ENCODE measurements at regions of chr12 and their contacts with region 1.

Region 1: GRCh38 chr12:89470741-89471509 is 53.7 kb downstream of the GALNT4 start:
- DNase-seq: peak in 2 of 5 donors; percentile 33 to 37
- H3K4me3 ChIP-seq: no peak overlapping the region
- H3K4me3 Mint-ChIP-seq: peak overlapping the region in 1 of 7 donors; percentile 52
- H3K27ac ChIP-seq: no peak overlapping the region
- H3K27ac Mint-ChIP-seq: peak overlapping the region; percentile 39 to 95 (median 76)
- H3K4me1 ChIP-seq: peaks cover 32% of the 10 kb centered on the region
- H3K4me1 Mint-ChIP-seq: peaks cover 60 to 64% (median 62%) of the 10 kb centered on the region in 3 donors
- H3K27me3 ChIP-seq: no peaks in the 10 kb centered on the region
- H3K27me3 Mint-ChIP-seq: no peaks in the 10 kb centered on the region

Region 2: DNA sequence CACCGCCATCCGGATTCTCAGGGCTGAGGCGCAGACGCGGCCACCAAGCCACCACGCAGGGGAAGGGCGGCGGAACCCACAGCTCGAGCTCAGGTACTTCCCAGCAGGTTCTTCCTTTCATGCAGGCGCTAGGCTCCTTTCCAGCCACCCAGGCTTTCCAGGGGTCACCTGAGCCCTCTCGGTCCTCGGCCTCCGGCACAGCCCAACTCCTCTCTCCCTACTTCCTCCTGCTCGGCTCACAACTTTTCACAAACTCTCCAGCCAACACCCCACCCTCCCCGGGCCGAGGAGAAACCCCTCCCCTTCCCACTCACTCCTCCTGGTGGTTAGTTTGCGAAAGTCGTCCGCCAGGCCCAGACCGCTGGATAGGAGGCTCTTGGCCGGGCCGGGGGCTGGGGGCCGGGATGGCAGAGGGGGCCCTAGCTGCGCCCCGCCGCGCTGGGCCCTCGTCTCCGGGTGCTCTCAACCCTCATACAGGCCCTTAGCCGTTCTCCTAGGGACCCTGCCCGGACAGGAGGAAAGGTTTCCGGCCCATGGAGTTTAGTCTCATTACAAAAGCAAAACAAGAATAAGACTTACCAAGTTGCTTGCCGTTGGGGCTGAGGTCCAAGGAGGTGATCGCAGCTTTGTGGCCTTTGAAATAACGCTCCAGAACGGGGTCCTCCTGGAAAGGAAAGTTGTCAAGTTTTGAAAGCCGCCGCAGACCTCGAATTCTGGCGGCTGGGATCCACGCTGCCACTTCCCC is 53.8 kb after region 1 on chr12 and contains the start of gene GALNT4:
- CTCF ChIA-PET with region 1: interaction called, 78 read pairs
- POLR2A ChIA-PET with region 1: interaction called, 9 read pairs
- DNase-seq: peak; percentile 53 to 84 (median 73)
- H3K4me3 ChIP-seq: peak within 1 kb of the TSS; percentile 87
- H3K4me3 Mint-ChIP-seq: peak within 1 kb of the TSS; percentile 92 to 99 (median 96)
- H3K27ac ChIP-seq: peak within 1 kb of the TSS; percentile 84
- H3K27ac Mint-ChIP-seq: peak within 1 kb of the TSS; percentile 85 to 98 (median 94)
- H3K4me1 ChIP-seq: peaks cover 40% of the 10 kb centered on the region
- H3K4me1 Mint-ChIP-seq: peaks cover 55 to 68% (median 65%) of the 10 kb centered on the region in 3 donors
- H3K27me3 ChIP-seq: no peaks in the 10 kb centered on the region
- H3K27me3 Mint-ChIP-seq: no peaks in the 10 kb centered on the region
- total RNA-seq, gene GALNT4: 5.8 to 6.5 TPM

Region 3: DNA sequence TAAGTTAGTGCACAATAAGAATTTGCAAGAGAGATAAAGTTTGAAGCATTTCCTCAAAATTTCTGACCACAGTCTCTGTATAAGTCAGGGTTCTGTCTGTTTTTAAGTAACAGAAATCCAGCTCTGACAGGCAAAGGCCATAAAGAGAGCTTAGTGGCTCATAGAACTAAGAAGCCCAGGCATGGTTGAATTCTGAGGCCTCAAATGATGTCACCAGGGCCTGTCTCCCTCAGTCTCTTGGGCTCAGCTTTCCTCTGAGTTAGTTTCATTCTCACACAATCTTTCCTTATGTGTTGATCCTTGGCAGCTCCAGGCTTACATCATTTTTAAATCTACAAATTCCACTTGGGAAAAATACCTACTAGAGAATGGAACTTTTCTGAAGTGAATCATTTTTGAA is 411.1 kb after region 1 on chr12:
- CTCF ChIA-PET with region 1: no interaction called
- POLR2A ChIA-PET with region 1: no interaction called
- DNase-seq: peak in 1 of 5 donors; percentile 14
- H3K4me3 ChIP-seq: no peak overlapping the region
- H3K4me3 Mint-ChIP-seq: peak overlapping the region in 6 of 7 donors; percentile 5 to 83 (median 68)
- H3K27ac ChIP-seq: no peak overlapping the region
- H3K27ac Mint-ChIP-seq: peak overlapping the region; percentile 78 to 98 (median 94)
- H3K4me1 ChIP-seq: peaks cover 42% of the 10 kb centered on the region
- H3K4me1 Mint-ChIP-seq: peaks cover 56 to 71% (median 69%) of the 10 kb centered on the region in 3 donors
- H3K27me3 ChIP-seq: no peaks in the 10 kb centered on the region
- H3K27me3 Mint-ChIP-seq: no peaks in the 10 kb centered on the region

Measured in CD8-positive, alpha-beta memory T cell (primary cell).